Activated CD4-positive, alpha-beta memory T cell treated with anti-CD3 and anti-CD28 coated beads, Interleukin-2, amount 10 ng/mL, durations not matched to agents 7 days and 5 days (primary cell): ENCODE measurements at regions of chr11 and their contacts with region 1.

Region 1: GRCh38 chr11:96054870-96055705 is 131.2 kb upstream of the MTMR2 start:
- DNase-seq: no peak
- H3K4me3 Mint-ChIP-seq: no peak overlapping the region
- H3K27ac Mint-ChIP-seq: no peak overlapping the region
- H3K4me1 Mint-ChIP-seq: peaks cover 41% of the 10 kb centered on the region
- H3K27me3 Mint-ChIP-seq: no peaks in the 10 kb centered on the region

Region 2: GRCh38 chr11:96074551-96075310 is 19.6 kb after region 1 on chr11:
- CTCF ChIA-PET with region 1: interaction called, 10 read pairs
- POLR2A ChIA-PET with region 1: no interaction called
- DNase-seq: no peak
- H3K4me3 Mint-ChIP-seq: no peak overlapping the region
- H3K27ac Mint-ChIP-seq: peak overlapping the region; percentile 18
- H3K4me1 Mint-ChIP-seq: peaks cover 31% of the 10 kb centered on the region
- H3K27me3 Mint-ChIP-seq: no peaks in the 10 kb centered on the region

Region 3: DNA sequence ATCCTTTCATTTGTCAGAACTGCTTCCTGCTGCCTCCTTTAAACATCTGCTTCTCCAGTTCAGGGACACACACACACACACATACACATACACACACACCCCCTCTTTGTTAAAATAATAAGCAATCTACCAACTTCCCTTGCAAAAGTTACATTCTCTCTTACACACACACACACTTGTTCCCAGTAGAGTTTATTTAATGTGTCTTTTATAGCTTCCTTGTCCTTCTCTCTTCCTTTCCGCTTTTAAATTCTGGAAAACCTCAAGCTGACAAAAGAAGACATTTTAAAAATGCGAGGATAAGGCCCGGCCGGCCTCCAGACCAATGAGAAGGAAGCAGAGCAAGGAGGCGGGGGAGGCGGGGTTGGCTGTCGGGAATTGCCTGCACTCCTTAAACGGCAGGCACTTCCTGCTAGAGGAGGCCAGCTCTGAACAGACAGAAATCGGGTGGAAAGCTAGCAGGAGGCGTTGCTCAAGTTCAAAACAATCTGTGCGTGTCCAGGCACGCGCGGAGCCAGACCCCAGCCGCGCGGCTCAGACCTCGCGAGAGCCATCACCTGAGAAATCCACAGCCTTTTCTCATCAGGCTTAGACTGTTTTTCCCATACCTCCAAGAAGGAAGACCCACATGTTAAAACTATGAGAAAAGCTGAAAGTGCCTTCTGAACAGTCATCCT is 188.0 kb after region 1 on chr11:
- CTCF ChIA-PET with region 1: interaction called, 16 read pairs
- POLR2A ChIA-PET with region 1: no interaction called
- DNase-seq: peak; percentile 78
- H3K4me3 Mint-ChIP-seq: peak overlapping the region; percentile 70
- H3K27ac Mint-ChIP-seq: peak overlapping the region; percentile 79
- H3K4me1 Mint-ChIP-seq: peaks cover 54% of the 10 kb centered on the region
- H3K27me3 Mint-ChIP-seq: no peaks in the 10 kb centered on the region

Region 4: GRCh38 chr11:96254087-96254486 is 199.0 kb after region 1 on chr11:
- CTCF ChIA-PET with region 1: no interaction called
- POLR2A ChIA-PET with region 1: no interaction called
- DNase-seq: peak; percentile 39
- H3K4me3 Mint-ChIP-seq: peak overlapping the region; percentile 63
- H3K27ac Mint-ChIP-seq: peak overlapping the region; percentile 77
- H3K4me1 Mint-ChIP-seq: peaks cover 71% of the 10 kb centered on the region
- H3K27me3 Mint-ChIP-seq: no peaks in the 10 kb centered on the region